Activated CD4-positive, alpha-beta T cell treated with anti-CD3 and anti-CD28 coated beads, Interleukin-2, amount 10 ng/mL, durations not matched to agents 24 days and 14 days (primary cell): ENCODE measurements at regions of chr2 and their contacts with region 1.

Region 1: DNA sequence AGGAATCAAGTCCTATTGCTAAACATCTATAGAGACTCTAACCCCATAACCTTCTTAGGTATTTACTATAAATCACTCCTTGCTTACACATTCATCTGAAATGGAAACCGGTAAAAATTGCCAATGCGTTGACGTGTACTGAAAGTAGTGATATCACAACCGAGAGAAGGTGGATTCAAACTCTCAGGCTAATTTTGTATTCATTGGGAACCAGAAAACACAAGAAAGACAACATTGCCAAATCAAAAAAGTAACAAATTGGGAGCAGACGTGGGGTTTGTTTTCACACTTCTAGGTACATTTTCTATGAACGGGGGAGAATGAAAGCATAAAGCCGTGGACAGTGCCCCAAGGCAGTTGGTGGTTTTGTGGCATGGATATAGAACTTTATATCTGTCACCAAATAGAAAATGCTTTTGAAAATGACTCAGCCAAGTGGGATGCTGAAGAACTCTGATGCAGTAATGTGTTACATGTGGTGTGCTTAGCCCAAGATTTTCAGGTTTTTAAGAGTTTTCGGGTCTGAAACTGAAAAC is 155.1 kb upstream of the RASGRP3 start:
- DNase-seq: peak; percentile 75
- H3K4me3 Mint-ChIP-seq: peak overlapping the region; percentile 61
- H3K27ac Mint-ChIP-seq: peak overlapping the region; percentile 91
- H3K4me1 Mint-ChIP-seq: peaks cover 22% of the 10 kb centered on the region
- H3K27me3 Mint-ChIP-seq: peaks cover 5% of the 10 kb centered on the region

Region 2: GRCh38 chr2:32591669-32592463 is 729.4 kb before region 1 on chr2:
- intact Hi-C with region 1: loop called (anchors 2 kb)
- DNase-seq: peak; percentile 76
- H3K4me3 Mint-ChIP-seq: peak overlapping the region; percentile 68
- H3K27ac Mint-ChIP-seq: peak overlapping the region; percentile 86
- H3K4me1 Mint-ChIP-seq: peaks cover 33% of the 10 kb centered on the region
- H3K27me3 Mint-ChIP-seq: no peaks in the 10 kb centered on the region

Region 3: GRCh38 chr2:33069894-33070651 is 251.2 kb before region 1 on chr2:
- intact Hi-C with region 1: loop called (anchors 1 kb)
- DNase-seq: peak; percentile 59
- H3K4me3 Mint-ChIP-seq: no peak overlapping the region
- H3K27ac Mint-ChIP-seq: peak overlapping the region; percentile 39
- H3K4me1 Mint-ChIP-seq: peaks cover 3% of the 10 kb centered on the region
- H3K27me3 Mint-ChIP-seq: no peaks in the 10 kb centered on the region

Region 4: DNA sequence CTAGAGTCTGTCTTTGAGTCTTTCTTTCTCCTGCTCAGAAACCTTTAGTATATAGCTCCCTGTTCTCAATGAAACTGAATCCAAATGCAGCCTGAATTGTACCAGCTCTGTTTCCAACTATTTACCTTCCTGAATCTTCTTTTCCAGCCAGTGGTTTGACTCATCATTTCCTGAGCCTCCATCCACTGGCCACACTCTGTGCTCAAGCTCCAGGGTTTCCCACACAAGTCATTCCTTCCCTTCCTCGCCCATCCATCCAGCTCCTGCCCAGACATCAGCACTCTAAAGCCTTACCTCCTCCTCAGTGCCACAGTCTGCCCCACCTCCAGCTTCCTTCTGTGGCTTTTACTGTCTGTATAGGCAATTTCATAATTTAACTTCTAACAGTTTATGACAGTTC is 78.5 kb before region 1 on chr2:
- intact Hi-C with region 1: no loop called
- DNase-seq: no peak
- H3K4me3 Mint-ChIP-seq: no peak overlapping the region
- H3K27ac Mint-ChIP-seq: no peak overlapping the region
- H3K4me1 Mint-ChIP-seq: no peaks in the 10 kb centered on the region
- H3K27me3 Mint-ChIP-seq: peaks cover 6% of the 10 kb centered on the region

Region 5: DNA sequence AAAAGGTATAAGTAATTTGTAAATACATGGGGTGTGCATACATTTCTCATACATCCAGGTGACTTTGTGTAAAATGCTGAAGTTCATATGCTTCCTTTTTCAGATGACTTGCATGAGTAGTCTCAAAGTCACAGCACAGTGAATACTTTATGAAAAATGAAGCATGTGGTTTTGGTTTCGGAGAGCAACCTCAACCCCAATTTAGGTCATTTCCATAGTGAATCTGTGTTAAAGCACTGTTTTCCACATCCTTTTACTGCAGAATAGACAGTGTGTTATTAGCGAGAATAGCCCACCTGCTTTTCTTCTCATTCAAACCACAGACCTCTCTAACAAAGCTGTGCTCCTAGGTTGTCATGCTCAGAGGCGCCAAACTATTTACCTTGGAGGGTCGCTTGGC is 49.3 kb before region 1 on chr2:
- intact Hi-C with region 1: loop called (anchors 1 kb)
- DNase-seq: peak; percentile 63
- H3K4me3 Mint-ChIP-seq: no peak overlapping the region
- H3K27ac Mint-ChIP-seq: no peak overlapping the region
- H3K4me1 Mint-ChIP-seq: peaks cover 2% of the 10 kb centered on the region
- H3K27me3 Mint-ChIP-seq: peaks cover 18% of the 10 kb centered on the region

Region 6: GRCh38 chr2:33475224-33476130 is 154.2 kb after region 1 on chr2:
- intact Hi-C with region 1: loop called (anchors 1 kb)
- DNase-seq: peak; percentile 95
- H3K4me3 Mint-ChIP-seq: peak overlapping the region; percentile 93
- H3K27ac Mint-ChIP-seq: peak overlapping the region; percentile 99
- H3K4me1 Mint-ChIP-seq: peaks cover 28% of the 10 kb centered on the region
- H3K27me3 Mint-ChIP-seq: peaks cover 6% of the 10 kb centered on the region

Region 7: DNA sequence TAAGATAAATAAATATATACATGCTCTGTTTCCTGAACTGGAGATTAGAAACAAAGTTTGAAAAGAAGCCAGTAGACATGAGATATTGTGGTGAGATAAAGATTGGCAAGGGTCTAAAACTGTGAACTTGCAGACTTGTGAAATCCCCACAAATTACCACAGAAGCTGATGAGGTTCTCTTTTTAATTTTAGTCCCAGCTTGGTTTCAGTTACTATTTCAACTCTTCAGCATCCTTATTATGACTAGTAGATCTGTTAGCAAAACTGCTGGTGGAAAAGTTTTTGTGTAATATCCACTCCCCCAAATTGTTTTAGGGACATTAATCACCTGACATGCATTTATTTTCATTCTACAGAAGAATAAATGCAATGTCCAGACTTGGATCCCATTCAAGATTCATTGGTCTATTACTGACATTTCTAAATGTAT is 175.9 kb after region 1 on chr2:
- intact Hi-C with region 1: loop called (anchors 1 kb)
- DNase-seq: peak; percentile 65
- H3K4me3 Mint-ChIP-seq: no peak overlapping the region
- H3K27ac Mint-ChIP-seq: no peak overlapping the region
- H3K4me1 Mint-ChIP-seq: peaks cover 35% of the 10 kb centered on the region
- H3K27me3 Mint-ChIP-seq: no peaks in the 10 kb centered on the region

Region 8: GRCh38 chr2:33599175-33599942 is 278.1 kb after region 1 on chr2 and contains the start of gene FAM98A:
- intact Hi-C with region 1: loop called (anchors 5 kb)
- DNase-seq: peak; percentile 100
- H3K4me3 Mint-ChIP-seq: peak within 1 kb of the TSS; percentile 98
- H3K27ac Mint-ChIP-seq: peak within 1 kb of the TSS; percentile 99
- H3K4me1 Mint-ChIP-seq: peaks cover 30% of the 10 kb centered on the region
- H3K27me3 Mint-ChIP-seq: peaks cover 2% of the 10 kb centered on the region
- total RNA-seq, gene FAM98A: 72.9 and 79.2 TPM in 2 replicates